BJ (cell line): ENCODE measurements at regions of chr11 and their contacts with region 1.

Region 1: GRCh38 chr11:66408488-66409214 is 12.2 kb upstream of the NPAS4 start:
- DNase-seq: peak; percentile 63
- H3K4me3 ChIP-seq: peak overlapping the region; percentile 54
- H3K27me3 ChIP-seq: peaks cover 13% of the 10 kb centered on the region
- CTCF ChIP-seq: peak; percentile 99

Region 2: GRCh38 chr11:66386171-66387069 is 22.2 kb before region 1 on chr11:
- CTCF ChIA-PET with region 1: interaction called, 20 read pairs
- POLR2A ChIA-PET with region 1: no interaction called
- DNase-seq: peak; percentile 44
- H3K4me3 ChIP-seq: 0 out of 2 replicates have a peak overlapping the region, but pooled peaks have one; percentile 5
- H3K27me3 ChIP-seq: no peaks in the 10 kb centered on the region
- CTCF ChIP-seq: peak; percentile 98

Region 3: DNA sequence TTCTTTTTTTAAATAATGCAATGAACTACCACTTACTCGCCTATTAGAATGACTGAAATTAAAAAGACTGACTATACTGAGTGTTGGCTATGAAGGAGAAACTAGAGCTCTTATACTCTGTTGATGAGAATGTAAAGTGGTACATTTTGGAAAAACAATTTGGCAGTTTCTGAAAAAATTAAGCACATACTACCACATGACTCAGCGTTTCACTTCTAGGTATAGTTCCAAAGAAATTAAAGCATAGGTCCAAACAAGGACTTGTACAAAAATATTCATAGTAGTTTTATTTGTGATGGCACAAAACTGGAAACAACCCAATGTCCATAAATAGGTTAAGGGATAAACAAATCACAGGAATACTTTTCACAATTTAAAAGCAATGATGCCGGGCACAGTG is 14.7 kb before region 1 on chr11:
- CTCF ChIA-PET with region 1: interaction called, 20 read pairs
- POLR2A ChIA-PET with region 1: no interaction called
- DNase-seq: no peak
- H3K4me3 ChIP-seq: no peak overlapping the region
- H3K27me3 ChIP-seq: no peaks in the 10 kb centered on the region
- CTCF ChIP-seq: no peak

Region 4: GRCh38 chr11:66421492-66422205 is 13.0 kb after region 1 on chr11:
- CTCF ChIA-PET with region 1: interaction called, 400 read pairs
- POLR2A ChIA-PET with region 1: interaction called, 5 read pairs
- DNase-seq: peak; percentile 16
- H3K4me3 ChIP-seq: no peak overlapping the region
- H3K27me3 ChIP-seq: peaks cover 6% of the 10 kb centered on the region; the same call in 1 of the 2 replicates
- CTCF ChIP-seq: no peak

Region 5: GRCh38 chr11:66438504-66439466 is 30.1 kb after region 1 on chr11 and contains the start of gene MRPL11:
- CTCF ChIA-PET with region 1: interaction called, 400 read pairs
- POLR2A ChIA-PET with region 1: no interaction called
- DNase-seq: peak; percentile 61
- H3K4me3 ChIP-seq: peak within 1 kb of the TSS; percentile 75
- H3K27me3 ChIP-seq: no peaks in the 10 kb centered on the region
- CTCF ChIP-seq: peak; percentile 78
- polyA plus RNA-seq, gene MRPL11: 52.7 and 54.5 TPM in 2 replicates

Region 6: DNA sequence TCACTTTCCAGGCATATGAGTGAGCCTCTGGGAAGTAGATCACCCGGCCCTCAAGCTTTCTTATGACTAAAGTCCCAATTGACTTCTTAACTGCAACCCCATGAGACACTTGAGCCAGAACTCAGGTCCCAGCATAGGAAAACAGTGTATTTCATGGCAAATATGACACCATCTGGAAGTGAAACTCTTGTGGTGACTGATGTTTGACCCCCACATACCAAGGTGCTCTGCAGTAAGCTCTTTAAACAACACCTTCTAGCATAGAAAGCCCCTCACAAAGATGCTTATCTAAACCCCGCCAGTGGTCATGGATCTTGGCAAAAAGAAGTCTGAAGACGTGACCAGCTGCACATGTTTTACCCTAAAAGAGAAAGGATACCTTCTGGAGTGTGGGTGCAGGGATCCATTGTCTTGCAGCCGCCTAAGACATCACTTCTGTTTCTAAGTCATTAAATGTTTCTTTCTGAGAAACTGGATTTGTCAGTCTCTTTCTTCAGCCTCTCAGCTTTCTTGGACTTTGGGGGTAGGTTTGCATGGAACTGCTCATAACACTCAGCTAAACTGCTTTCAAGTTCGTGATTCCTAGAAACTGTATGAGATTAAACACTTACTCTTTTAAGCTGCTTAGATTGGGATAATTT is 50.6 kb after region 1 on chr11:
- CTCF ChIA-PET with region 1: no interaction called
- POLR2A ChIA-PET with region 1: no interaction called
- DNase-seq: no peak
- H3K4me3 ChIP-seq: no peak overlapping the region
- H3K27me3 ChIP-seq: peaks cover 5% of the 10 kb centered on the region
- CTCF ChIP-seq: no peak

Region 7: GRCh38 chr11:66491315-66491935 is 82.8 kb after region 1 on chr11:
- CTCF ChIA-PET with region 1: interaction called, 4 read pairs
- POLR2A ChIA-PET with region 1: interaction called, 13 read pairs
- DNase-seq: no peak
- H3K4me3 ChIP-seq: no peak overlapping the region
- H3K27me3 ChIP-seq: no peaks in the 10 kb centered on the region
- CTCF ChIP-seq: peak; percentile 52

Region 8: DNA sequence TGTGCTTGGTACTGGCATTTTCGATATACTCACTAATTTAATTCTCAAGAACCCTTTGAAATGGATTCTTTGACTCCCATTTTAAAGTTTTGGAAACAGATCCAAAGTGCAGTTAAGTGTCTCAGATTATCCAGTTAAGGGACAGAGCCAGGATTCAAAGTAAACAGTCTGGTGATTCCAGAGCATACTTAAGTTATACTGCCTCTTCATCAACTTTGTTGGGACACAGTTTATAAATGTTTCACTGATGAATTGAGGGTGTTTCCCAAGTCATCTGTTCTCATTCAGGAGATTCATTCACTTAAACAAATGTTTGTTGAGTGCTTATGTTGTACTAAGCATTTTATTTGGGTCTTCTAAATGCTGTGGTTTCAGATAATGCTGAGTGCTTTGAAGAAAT is 727.5 kb after region 1 on chr11:
- CTCF ChIA-PET with region 1: no interaction called
- POLR2A ChIA-PET with region 1: no interaction called
- DNase-seq: no peak
- H3K4me3 ChIP-seq: no peak overlapping the region
- H3K27me3 ChIP-seq: no peaks in the 10 kb centered on the region
- CTCF ChIP-seq: no peak